ENCODE measurements at regions of chr4 and their contacts with region 1.

Region 1: DNA sequence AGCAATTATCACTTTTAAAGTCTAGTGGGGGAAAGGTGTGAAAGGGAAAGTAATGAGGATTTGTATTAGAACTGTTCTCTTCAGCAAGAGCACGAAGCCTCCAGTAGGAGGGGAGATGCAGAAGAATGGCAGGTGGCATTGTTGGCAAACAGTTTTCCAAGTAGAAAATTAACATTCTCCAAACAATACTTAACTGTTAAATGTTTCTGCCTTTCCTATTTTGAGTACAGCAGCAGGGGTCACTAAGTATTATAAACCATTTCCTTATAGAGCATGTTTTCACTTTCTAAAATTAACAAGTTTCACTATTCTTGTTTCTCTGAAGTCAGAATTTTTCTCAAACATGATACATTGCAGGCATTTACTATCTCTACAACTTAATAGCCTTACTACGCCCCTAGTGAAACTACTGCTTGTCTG is 58.7 kb downstream of the LEF1 start:
- DNase-seq: no peak
- H3K4me3 Mint-ChIP-seq: peak overlapping the region; percentile 9
- H3K27ac Mint-ChIP-seq: peak overlapping the region; percentile 68
- H3K4me1 Mint-ChIP-seq: peaks cover 91% of the 10 kb centered on the region
- H3K27me3 Mint-ChIP-seq: no peaks in the 10 kb centered on the region

Region 2: DNA sequence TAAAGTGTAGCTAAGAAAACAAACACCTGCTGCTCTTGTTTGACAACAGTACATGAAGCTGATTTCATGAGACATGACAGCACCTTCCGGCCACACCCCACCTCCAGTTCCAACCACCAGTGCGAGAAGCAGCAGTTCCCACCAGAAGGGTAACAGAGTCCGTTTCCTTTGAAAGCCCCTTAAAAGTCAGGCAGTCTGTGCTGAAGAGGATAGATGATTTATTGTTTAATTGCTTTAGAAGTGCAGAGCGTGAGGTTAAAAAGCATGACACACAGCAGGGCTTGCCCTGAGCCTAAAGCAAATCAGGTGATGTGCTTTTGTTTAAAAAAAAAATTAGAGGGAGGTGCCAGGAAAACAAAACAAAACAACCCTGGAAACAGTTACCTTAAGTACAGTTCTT is 37.7 kb before region 1 on chr4:
- CTCF ChIA-PET with region 1: interaction called, 3 read pairs
- POLR2A ChIA-PET with region 1: no interaction called
- intact Hi-C with region 1: loop called (anchors 5 kb)
- DNase-seq: peak; percentile 71
- H3K4me3 Mint-ChIP-seq: no peak overlapping the region
- H3K27ac Mint-ChIP-seq: peak overlapping the region; percentile 68
- H3K4me1 Mint-ChIP-seq: peaks cover 74% of the 10 kb centered on the region
- H3K27me3 Mint-ChIP-seq: no peaks in the 10 kb centered on the region

Region 3: GRCh38 chr4:108097990-108098553 is 11.9 kb before region 1 on chr4:
- CTCF ChIA-PET with region 1: interaction called, 5 read pairs
- POLR2A ChIA-PET with region 1: interaction called, 24 read pairs
- intact Hi-C with region 1: loop called (anchors 1 kb)
- DNase-seq: no peak
- H3K4me3 Mint-ChIP-seq: no peak overlapping the region
- H3K27ac Mint-ChIP-seq: peak overlapping the region; percentile 70
- H3K4me1 Mint-ChIP-seq: peaks cover 93% of the 10 kb centered on the region
- H3K27me3 Mint-ChIP-seq: no peaks in the 10 kb centered on the region

Region 4: DNA sequence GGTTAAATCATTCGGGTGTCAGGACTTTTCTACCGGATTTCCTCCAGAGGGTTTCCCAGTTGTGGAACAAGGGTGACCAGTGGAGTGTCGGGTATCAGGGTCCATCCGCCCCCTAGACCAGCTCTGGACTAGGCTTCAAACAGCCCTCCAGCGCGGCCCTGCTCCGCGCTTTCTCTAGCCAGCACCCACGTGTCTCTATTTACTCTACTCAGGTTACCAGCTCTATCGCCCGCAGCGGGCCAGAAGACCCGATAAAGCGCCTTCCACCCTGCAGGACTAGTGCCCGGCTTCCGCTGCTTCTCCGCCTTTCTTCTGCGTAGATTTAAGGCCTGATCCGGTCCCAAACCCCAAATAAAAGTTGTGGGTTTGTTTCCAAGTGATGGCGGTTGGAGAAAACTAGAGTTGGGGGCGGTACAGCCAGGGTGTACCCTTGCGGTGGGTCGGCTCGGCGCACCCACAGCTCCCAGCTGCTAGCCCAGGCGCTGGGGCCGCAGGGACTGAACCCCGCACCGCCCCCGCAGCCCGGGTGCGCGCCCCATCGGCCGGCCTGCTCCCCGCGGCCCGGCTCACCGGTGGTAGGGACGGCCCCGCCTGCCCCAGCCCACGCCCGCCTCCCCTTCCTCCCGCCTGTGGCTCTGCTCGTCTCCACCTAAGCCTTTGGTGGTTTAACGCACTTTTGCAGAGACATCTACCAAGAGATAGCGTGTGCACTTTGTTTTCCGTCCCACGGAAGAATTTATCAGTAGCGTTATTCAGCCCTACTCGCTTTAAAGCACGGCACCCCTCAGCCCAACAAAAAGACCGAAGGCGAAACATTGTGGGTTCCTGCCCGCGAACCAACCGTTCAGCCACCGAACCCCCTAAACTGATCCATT is 56.7 kb after region 1 on chr4:
- CTCF ChIA-PET with region 1: interaction called, 6 read pairs
- POLR2A ChIA-PET with region 1: interaction called, 18 read pairs
- intact Hi-C with region 1: loop called (anchors 1 kb)
- DNase-seq: peak; percentile 81
- H3K4me3 Mint-ChIP-seq: peak overlapping the region; percentile 85
- H3K27ac Mint-ChIP-seq: peak overlapping the region; percentile 94
- H3K4me1 Mint-ChIP-seq: peaks cover 46% of the 10 kb centered on the region
- H3K27me3 Mint-ChIP-seq: peaks cover 9% of the 10 kb centered on the region

Measured in activated CD4-positive, alpha-beta memory T cell treated with anti-CD3 and anti-CD28 coated beads for 36 hours (primary cell).